ENCODE measurements at regions of chr9 and their contacts with region 1.

Region 1: DNA sequence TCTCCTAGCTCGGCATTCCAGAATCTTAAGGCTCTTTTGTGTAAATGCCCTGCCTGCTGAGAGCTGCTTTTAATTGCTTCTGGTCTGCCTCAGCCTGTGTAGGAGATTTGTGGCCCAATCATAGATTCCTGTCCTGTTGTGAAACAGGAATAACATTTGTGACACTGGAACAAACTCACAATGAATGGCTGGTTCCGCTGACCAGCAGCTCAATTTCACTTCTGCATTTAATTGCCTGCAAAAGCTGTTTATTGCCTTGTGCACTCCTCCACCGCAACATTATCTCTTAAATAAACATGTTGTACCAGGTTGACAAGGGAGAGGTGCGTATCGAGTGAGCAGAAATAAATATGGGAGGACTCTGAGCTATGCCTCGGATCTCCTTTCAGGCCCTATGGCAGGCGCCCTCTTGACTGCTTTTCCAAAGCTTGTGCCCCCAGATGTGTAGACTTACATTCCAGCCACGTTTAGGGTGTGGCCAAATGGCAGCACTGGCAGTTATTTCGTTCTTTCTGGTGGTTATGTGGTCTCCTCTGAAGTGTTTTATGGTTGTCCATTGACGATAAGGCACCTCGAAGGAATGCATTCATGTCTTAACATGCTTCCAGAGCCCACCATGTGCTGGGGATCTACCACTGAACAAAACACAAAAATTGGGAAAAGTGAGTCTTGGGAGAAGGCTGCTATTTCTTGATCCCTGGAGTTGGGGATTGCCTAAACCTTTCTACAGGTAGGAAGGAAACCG is 58.1 kb downstream of the DMRT1 start:
- DNase-seq: no peak
- H3K4me3 ChIP-seq: 0 out of 8 replicates have a peak overlapping the region, but pooled peaks of 1 of the 4 experiments have one; percentile 11
- H3K27ac ChIP-seq: no peak overlapping the region
- H3K4me1 ChIP-seq: peaks cover 1 to 13% (median 10%) of the 10 kb centered on the region in 4 experiments; a peak in 4 of 7 replicates
- H3K27me3 ChIP-seq: no peaks in the 10 kb centered on the region; a peak in 1 of 7 replicates
- CTCF ChIP-seq: no peak
- EP300 ChIP-seq: no peak
- POLR2A ChIP-seq: no peak
- RAD21 ChIP-seq: no peak

Region 2: DNA sequence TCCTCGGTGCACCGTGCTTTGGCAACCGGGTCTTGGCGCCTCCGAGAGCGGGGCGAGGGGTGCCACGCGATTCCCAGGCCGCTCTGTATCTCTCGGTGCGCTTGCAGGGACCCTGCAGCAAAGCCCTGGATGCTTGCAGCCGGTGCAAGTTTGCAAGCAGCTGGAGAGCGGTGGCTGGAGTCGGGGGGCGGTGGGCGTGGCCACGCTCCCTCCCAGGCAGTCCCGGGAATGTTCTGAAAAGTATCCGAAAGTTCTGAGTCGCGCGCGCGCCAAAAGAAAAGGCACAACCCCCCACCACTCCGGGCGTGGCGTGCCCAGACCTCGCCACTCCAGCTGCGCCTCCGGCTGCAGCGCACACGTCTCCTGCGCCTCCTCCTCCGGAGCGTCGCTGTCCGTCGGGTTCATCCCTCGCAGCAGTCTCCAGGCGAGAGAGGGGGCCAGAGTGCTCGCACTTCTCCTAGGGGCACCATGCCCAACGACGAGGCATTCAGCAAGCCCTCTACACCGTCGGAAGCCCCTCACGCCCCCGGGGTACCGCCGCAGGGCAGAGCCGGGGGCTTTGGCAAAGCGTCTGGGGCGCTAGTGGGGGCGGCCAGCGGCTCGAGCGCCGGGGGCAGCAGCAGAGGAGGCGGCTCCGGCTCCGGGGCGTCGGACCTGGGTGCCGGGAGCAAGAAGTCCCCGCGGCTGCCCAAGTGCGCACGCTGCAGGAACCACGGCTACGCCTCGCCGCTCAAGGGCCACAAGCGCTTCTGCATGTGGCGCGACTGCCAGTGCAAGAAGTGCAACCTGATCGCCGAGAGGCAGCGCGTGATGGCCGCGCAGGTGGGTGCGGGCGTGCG is 58.0 kb before region 1 on chr9 and contains the start of gene DMRT1:
- CTCF ChIA-PET with region 1: no interaction called
- POLR2A ChIA-PET with region 1: no interaction called
- DNase-seq: peak in 1 of 2 experiments; percentile 72
- H3K4me3 ChIP-seq: peak within 1 kb of the TSS in 2 of 4 experiments; percentile 18 to 54; a peak in 5 of 8 replicates
- H3K27ac ChIP-seq: no peak within 1 kb of the TSS
- H3K4me1 ChIP-seq: peaks cover 0 to 7% (median 0%) of the 10 kb centered on the region in 4 experiments; a peak in 3 of 7 replicates
- H3K27me3 ChIP-seq: peaks cover 54 to 96% (median 92%) of the 10 kb centered on the region in 4 experiments
- CTCF ChIP-seq: no peak
- EP300 ChIP-seq: no peak
- POLR2A ChIP-seq: no peak
- RAD21 ChIP-seq: no peak
- total RNA-seq, gene DMRT1: not detected in 2 replicates

Region 3: GRCh38 chr9:911003-911402 is 11.4 kb after region 1 on chr9:
- CTCF ChIA-PET with region 1: interaction called, 20 read pairs
- POLR2A ChIA-PET with region 1: interaction called, 3 read pairs
- DNase-seq: peak in 1 of 2 experiments; percentile 19
- H3K4me3 ChIP-seq: no peak overlapping the region
- H3K27ac ChIP-seq: no peak overlapping the region
- H3K4me1 ChIP-seq: peaks cover 0 to 11% (median 2%) of the 10 kb centered on the region in 4 experiments; a peak in 3 of 7 replicates
- H3K27me3 ChIP-seq: no peaks in the 10 kb centered on the region; a peak in 1 of 7 replicates
- CTCF ChIP-seq: peak; percentile 59 to 70 (median 68)
- EP300 ChIP-seq: no peak
- POLR2A ChIP-seq: no peak
- RAD21 ChIP-seq: peak; percentile 49 to 68

Region 4: DNA sequence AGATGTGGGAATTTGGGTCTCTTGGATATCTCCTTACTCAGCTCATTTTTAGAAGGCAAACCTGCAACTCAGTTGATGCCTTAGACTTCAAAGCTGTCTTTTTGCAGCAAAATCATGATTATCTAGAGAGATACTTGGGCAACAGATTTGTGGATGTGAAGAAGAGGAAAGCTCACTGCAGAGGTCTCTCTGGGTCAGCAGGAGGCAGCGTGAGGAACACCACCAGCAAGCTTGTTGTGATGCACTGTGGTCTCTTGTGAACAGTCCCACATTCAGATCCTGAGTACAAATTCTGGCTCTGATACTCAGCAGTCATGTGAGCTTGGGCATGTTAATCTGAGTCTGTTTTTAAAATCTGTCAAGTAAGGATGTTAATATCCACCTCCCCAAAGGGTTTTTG is 50.5 kb after region 1 on chr9:
- CTCF ChIA-PET with region 1: interaction called, 36 read pairs
- POLR2A ChIA-PET with region 1: no interaction called
- DNase-seq: no peak
- H3K4me3 ChIP-seq: no peak overlapping the region
- H3K27ac ChIP-seq: no peak overlapping the region
- H3K4me1 ChIP-seq: peaks cover 0 to 2% (median 0%) of the 10 kb centered on the region in 4 experiments; a peak in 1 of 7 replicates
- H3K27me3 ChIP-seq: no peaks in the 10 kb centered on the region
- CTCF ChIP-seq: peak; percentile 16 to 61 (median 56); a peak in 3 of 4 replicates
- EP300 ChIP-seq: no peak
- POLR2A ChIP-seq: no peak
- RAD21 ChIP-seq: no peak

Region 5: GRCh38 chr9:994005-994404 is 94.4 kb after region 1 on chr9:
- CTCF ChIA-PET with region 1: interaction called, 23 read pairs
- POLR2A ChIA-PET with region 1: no interaction called
- DNase-seq: no peak
- H3K4me3 ChIP-seq: no peak overlapping the region
- H3K27ac ChIP-seq: no peak overlapping the region
- H3K4me1 ChIP-seq: no peaks in the 10 kb centered on the region
- H3K27me3 ChIP-seq: no peaks in the 10 kb centered on the region
- CTCF ChIP-seq: no peak
- EP300 ChIP-seq: no peak
- POLR2A ChIP-seq: no peak
- RAD21 ChIP-seq: no peak

Region 6: DNA sequence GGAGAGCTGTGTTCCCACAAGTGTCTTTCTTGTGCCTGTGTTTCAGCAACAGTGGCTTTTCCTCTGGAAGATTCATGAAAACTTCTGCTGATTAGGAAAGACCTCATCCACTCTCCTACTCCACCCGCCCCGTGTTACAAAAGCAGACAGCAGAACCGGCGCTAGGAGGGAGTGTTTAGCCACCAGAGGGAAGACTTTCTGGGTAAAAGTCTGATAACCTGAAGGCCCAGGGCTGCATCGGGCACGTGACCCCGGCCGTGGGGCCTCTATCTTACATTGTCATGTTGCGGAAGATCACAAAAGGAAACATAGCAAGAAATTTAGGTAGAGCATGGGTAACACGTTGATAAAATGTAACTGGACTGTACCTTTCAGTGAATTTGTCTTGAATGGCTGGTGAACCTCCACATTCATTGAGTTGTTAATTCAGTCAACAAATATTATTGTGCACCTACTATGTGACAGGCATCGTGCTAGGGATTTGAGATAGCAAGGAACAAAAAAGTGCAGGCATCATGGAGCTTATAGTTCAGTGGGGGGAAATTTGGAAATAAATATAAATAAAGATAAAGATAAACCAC is 118.6 kb after region 1 on chr9:
- CTCF ChIA-PET with region 1: no interaction called
- POLR2A ChIA-PET with region 1: no interaction called
- DNase-seq: peak in 1 of 2 experiments; percentile 65
- H3K4me3 ChIP-seq: no peak overlapping the region
- H3K27ac ChIP-seq: no peak overlapping the region
- H3K4me1 ChIP-seq: no peaks in the 10 kb centered on the region
- H3K27me3 ChIP-seq: no peaks in the 10 kb centered on the region; a peak in 1 of 7 replicates
- CTCF ChIP-seq: peak; percentile 0 to 33 (median 31)
- EP300 ChIP-seq: no peak
- POLR2A ChIP-seq: no peak
- RAD21 ChIP-seq: peak; percentile 45 to 58

Measured in H1 (cell line).